ENCODE measurements at regions of chr15 and their contacts with region 1.

Region 1: GRCh38 chr15:101277038-101277882 is at the start of gene SELENOS:
- DNase-seq: peak; percentile 74 to 98 (median 84)
- ATAC-seq: peak; percentile 99
- H3K4me3 ChIP-seq: peak within 1 kb of the TSS; percentile 92
- H3K4me3 Mint-ChIP-seq: peak within 1 kb of the TSS; percentile 86 to 99 (median 95)
- H3K27ac ChIP-seq: peak within 1 kb of the TSS; percentile 88
- H3K27ac Mint-ChIP-seq: peak within 1 kb of the TSS; percentile 80 to 96 (median 91)
- H3K4me1 ChIP-seq: peaks cover 11 to 21% of the 10 kb centered on the region in 2 donors
- H3K4me1 Mint-ChIP-seq: peaks cover 13 to 37% (median 24%) of the 10 kb centered on the region in 7 donors
- H3K27me3 ChIP-seq: no peaks in the 10 kb centered on the region
- H3K27me3 Mint-ChIP-seq: no peaks in the 10 kb centered on the region
- total RNA-seq, gene SELENOS: 24.8 to 42.2 (median 37.6) TPM

Region 2: GRCh38 chr15:100918034-100918689 is 359.1 kb before region 1 on chr15:
- CTCF ChIA-PET with region 1: no interaction called
- POLR2A ChIA-PET with region 1: no interaction called
- intact Hi-C with region 1: loop called in 1 of 2 experiments (anchors 10 kb)
- DNase-seq: peak in 8 of 9 donors; percentile 26 to 81 (median 52)
- ATAC-seq: peak; percentile 89
- H3K4me3 ChIP-seq: peak overlapping the region; percentile 53
- H3K4me3 Mint-ChIP-seq: peak overlapping the region; percentile 73 to 89 (median 84)
- H3K27ac ChIP-seq: no peak overlapping the region
- H3K27ac Mint-ChIP-seq: no peak overlapping the region
- H3K4me1 ChIP-seq: no peaks in the 10 kb centered on the region
- H3K4me1 Mint-ChIP-seq: peaks cover 9 to 29% (median 18%) of the 10 kb centered on the region in 7 donors
- H3K27me3 ChIP-seq: peaks cover 0 to 16% of the 10 kb centered on the region in 2 donors
- H3K27me3 Mint-ChIP-seq: peaks cover 63 to 77% (median 73%) of the 10 kb centered on the region in 5 donors

Region 3: DNA sequence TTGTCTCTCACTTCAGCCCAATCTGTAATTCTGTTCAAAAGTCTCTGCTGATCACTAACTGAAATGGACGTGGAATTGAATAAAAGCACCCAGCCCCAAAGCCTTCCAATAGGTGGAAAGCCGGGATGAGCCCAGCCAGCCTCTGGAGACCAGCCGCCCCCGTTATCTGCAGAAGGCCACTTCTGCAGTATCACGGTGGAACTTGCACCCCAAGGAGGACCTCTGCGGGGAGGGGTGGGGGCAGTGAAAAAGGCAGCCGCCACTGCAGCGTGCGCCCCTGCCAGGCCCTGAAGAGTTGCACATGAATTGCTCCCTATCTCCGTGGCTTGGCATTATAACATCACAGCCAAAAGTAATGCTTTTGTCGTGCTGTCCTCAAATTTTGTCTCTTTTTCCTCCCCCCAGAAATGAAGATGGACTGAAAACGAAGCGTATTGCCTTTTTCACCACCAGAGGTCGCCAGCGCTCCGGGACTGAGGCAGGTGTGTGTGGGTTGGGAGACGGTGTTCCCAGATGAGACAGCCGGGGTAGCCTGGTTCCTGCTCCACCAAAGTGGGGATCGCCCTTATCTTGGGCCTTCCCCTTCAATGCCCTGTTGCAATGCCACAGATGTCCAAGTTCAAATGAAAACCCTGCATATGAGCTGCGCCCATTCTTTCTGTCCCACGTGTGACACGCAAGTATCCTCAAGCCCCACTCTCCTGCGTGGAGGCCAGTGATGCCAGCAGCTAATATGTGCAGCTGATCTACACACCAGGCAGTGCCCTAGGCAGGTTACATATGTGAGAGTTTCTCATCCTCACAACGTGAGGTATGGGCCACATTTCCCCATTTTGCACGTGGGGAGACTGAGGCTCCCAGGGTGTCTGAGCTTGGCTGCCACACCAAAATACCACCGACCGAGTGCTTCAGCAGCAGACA is 262.1 kb before region 1 on chr15:
- CTCF ChIA-PET with region 1: no interaction called
- POLR2A ChIA-PET with region 1: no interaction called
- intact Hi-C with region 1: loop called in 1 of 2 experiments (anchors 5 kb)
- DNase-seq: peak; percentile 19 to 77 (median 48)
- ATAC-seq: peak; percentile 53
- H3K4me3 ChIP-seq: no peak overlapping the region
- H3K4me3 Mint-ChIP-seq: no peak overlapping the region
- H3K27ac ChIP-seq: no peak overlapping the region
- H3K27ac Mint-ChIP-seq: no peak overlapping the region
- H3K4me1 ChIP-seq: no peaks in the 10 kb centered on the region
- H3K4me1 Mint-ChIP-seq: peaks cover 0 to 3% (median 0%) of the 10 kb centered on the region in 7 donors
- H3K27me3 ChIP-seq: no peaks in the 10 kb centered on the region
- H3K27me3 Mint-ChIP-seq: peaks cover 0 to 3% (median 0%) of the 10 kb centered on the region in 5 donors

Region 4: GRCh38 chr15:101035611-101036010 is 241.6 kb before region 1 on chr15:
- CTCF ChIA-PET with region 1: no interaction called
- POLR2A ChIA-PET with region 1: no interaction called
- intact Hi-C with region 1: no loop called
- DNase-seq: no peak
- ATAC-seq: no peak
- H3K4me3 ChIP-seq: no peak overlapping the region
- H3K4me3 Mint-ChIP-seq: no peak overlapping the region
- H3K27ac ChIP-seq: no peak overlapping the region
- H3K27ac Mint-ChIP-seq: no peak overlapping the region
- H3K4me1 ChIP-seq: no peaks in the 10 kb centered on the region
- H3K4me1 Mint-ChIP-seq: no peaks in the 10 kb centered on the region
- H3K27me3 ChIP-seq: no peaks in the 10 kb centered on the region
- H3K27me3 Mint-ChIP-seq: peaks cover 17 to 58% (median 46%) of the 10 kb centered on the region in 5 donors

Region 5: DNA sequence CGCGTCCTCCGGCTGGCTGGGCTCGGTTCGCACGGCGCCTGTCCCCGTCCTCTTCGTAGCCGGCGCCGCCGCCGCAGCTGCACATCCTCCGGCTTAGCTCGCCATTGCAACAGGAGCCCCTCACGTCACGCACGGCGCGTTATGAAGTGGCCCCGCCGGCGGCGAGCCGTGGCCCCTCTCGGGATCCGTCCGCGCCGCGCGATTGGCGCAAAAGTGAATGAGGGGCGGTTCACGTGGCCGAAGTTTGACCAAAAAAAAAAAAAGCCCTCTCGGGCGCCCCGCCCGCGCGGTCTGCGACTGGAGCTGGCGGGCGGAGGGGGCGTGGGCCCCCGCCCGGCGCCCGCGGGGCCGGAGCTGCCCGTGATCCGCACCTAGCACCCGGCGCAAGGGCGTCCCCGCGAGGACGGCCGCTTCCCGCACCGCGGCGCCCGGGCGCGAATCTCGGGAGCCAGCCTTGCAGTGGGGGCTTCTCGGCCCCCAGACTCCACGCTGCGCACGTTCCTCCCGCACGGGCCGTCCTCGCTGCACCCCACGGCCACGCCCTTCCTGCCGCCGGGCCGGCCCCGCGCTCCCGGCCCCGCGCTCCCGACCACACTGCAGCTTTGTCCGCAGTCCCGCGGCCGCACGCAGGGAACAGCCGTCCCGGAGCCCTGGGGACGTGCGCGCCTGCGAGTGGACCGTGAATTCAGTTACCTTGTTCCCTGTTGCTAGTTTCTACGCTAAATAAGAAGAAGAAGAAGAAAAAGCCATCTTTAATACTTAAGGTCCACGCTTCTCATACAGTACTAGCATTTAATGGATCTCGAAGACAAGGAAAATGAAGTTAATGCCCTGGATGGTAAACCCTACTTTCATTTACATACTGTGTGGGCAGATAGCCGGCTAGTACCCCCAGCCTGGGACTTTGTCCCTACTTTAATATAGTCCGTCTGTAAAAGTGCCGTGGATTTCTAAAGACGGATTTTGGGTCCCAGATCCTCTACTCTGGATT is 25.1 kb before region 1 on chr15 and contains the start of gene CHSY1:
- CTCF ChIA-PET with region 1: no interaction called
- POLR2A ChIA-PET with region 1: interaction called, 4 read pairs
- intact Hi-C with region 1: loop called (anchors 1 kb)
- DNase-seq: peak; percentile 71 to 91 (median 81)
- ATAC-seq: peak; percentile 91
- H3K4me3 ChIP-seq: peak within 1 kb of the TSS; percentile 64
- H3K4me3 Mint-ChIP-seq: peak within 1 kb of the TSS; percentile 84 to 97 (median 94)
- H3K27ac ChIP-seq: peak within 1 kb of the TSS; percentile 62
- H3K27ac Mint-ChIP-seq: peak within 1 kb of the TSS; percentile 77 to 96 (median 84)
- H3K4me1 ChIP-seq: peaks cover 17 to 21% of the 10 kb centered on the region in 2 donors
- H3K4me1 Mint-ChIP-seq: peaks cover 17 to 63% (median 37%) of the 10 kb centered on the region in 7 donors
- H3K27me3 ChIP-seq: no peaks in the 10 kb centered on the region
- H3K27me3 Mint-ChIP-seq: no peaks in the 10 kb centered on the region
- total RNA-seq, gene CHSY1: 8.9 to 47.0 (median 10.8) TPM

Region 6: GRCh38 chr15:101390060-101390459 is 112.8 kb after region 1 on chr15:
- CTCF ChIA-PET with region 1: no interaction called
- POLR2A ChIA-PET with region 1: no interaction called
- intact Hi-C with region 1: no loop called
- DNase-seq: no peak
- ATAC-seq: no peak
- H3K4me3 ChIP-seq: no peak overlapping the region
- H3K4me3 Mint-ChIP-seq: no peak overlapping the region
- H3K27ac ChIP-seq: no peak overlapping the region
- H3K27ac Mint-ChIP-seq: no peak overlapping the region
- H3K4me1 ChIP-seq: no peaks in the 10 kb centered on the region
- H3K4me1 Mint-ChIP-seq: peaks cover 0 to 5% (median 0%) of the 10 kb centered on the region in 7 donors
- H3K27me3 ChIP-seq: no peaks in the 10 kb centered on the region
- H3K27me3 Mint-ChIP-seq: peaks cover 0 to 13% (median 8%) of the 10 kb centered on the region in 5 donors

Region 7: DNA sequence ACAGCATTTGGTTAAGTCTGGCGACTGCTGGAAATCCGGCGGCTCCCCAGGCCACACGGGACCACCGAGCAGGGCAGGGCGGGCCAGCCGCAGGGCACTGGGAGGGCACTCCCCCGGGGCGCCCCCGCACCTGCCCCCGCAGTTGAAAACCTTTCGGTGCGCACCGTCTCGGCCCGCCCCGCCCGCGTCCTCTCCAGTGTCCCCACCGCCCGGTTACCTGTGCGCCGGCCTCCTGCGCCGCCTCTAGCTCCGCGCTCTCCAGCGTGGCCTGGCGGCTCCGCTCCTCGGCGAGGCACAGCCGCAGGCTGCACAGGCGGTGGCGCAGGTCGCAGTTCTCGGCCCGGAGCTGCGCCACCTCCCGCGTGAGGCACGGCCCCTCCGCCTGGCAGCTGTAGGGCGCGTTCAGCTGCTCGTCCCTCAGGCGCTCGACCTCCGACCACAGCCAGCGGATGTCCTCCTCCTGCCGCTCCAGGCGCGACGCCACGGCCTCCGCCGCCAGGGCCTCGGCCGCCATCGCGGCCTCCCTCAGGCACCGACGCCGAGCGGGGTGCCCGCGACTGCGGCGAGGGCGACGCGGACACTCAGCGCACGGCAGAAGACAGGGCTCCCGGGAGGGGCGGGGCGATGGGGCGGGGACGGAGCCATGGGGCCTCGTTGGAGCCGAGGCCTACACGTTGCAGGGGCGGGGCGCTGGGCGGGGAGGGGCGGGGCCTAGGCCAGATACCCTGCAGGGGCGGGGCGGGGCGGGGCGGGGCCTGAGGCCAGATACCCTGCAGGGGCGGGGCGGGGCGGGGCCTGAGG is 446.8 kb after region 1 on chr15 and contains the start of gene TARS3:
- CTCF ChIA-PET with region 1: no interaction called
- POLR2A ChIA-PET with region 1: no interaction called
- intact Hi-C with region 1: loop called in 1 of 2 experiments (anchors 5 kb)
- DNase-seq: peak; percentile 84 to 97 (median 90)
- ATAC-seq: peak; percentile 97
- H3K4me3 ChIP-seq: peak within 1 kb of the TSS; percentile 77
- H3K4me3 Mint-ChIP-seq: peak within 1 kb of the TSS; percentile 79 to 97 (median 91)
- H3K27ac ChIP-seq: peak within 1 kb of the TSS; percentile 88
- H3K27ac Mint-ChIP-seq: peak within 1 kb of the TSS; percentile 83 to 97 (median 91)
- H3K4me1 ChIP-seq: peaks cover 5 to 11% of the 10 kb centered on the region in 2 donors
- H3K4me1 Mint-ChIP-seq: peaks cover 16 to 42% (median 35%) of the 10 kb centered on the region in 7 donors
- H3K27me3 ChIP-seq: no peaks in the 10 kb centered on the region
- H3K27me3 Mint-ChIP-seq: peaks cover 0 to 3% (median 0%) of the 10 kb centered on the region in 5 donors
- total RNA-seq, gene TARS3: 20.5 to 42.6 (median 23.6) TPM